Pancreas (tissue), 10 donors: ENCODE measurements at regions of chr5 and their contacts with region 1.

Region 1: GRCh38 chr5:65481635-65482295 is at the start of gene ADAMTS6:
- DNase-seq: peak; percentile 78 to 86 (median 80)
- ATAC-seq: peak; percentile 76 to 90 (median 89)
- H3K4me3 ChIP-seq: peak within 1 kb of the TSS; percentile 30 to 44 (median 36)
- H3K27ac ChIP-seq: peak within 1 kb of the TSS; percentile 14 to 87 (median 64)
- H3K4me1 ChIP-seq: peaks cover 4 to 14% (median 13%) of the 10 kb centered on the region in 3 donors
- H3K27me3 ChIP-seq: no peaks in the 10 kb centered on the region
- CTCF ChIP-seq: no peak
- total RNA-seq, gene ADAMTS6: 0.14 to 0.47 (median 0.30) TPM

Region 2: GRCh38 chr5:64576250-64576649 is 905.5 kb before region 1 on chr5:
- intact Hi-C with region 1: no loop called
- DNase-seq: no peak
- ATAC-seq: no peak
- H3K4me3 ChIP-seq: no peak overlapping the region
- H3K27ac ChIP-seq: no peak overlapping the region
- H3K4me1 ChIP-seq: no peaks in the 10 kb centered on the region
- H3K27me3 ChIP-seq: no peaks in the 10 kb centered on the region
- CTCF ChIP-seq: no peak

Region 3: GRCh38 chr5:64811050-64811640 is 670.6 kb before region 1 on chr5:
- intact Hi-C with region 1: loop called in 1 of 3 experiments (anchors 10 kb)
- DNase-seq: no peak
- ATAC-seq: peak in 2 of 4 donors; percentile 54 to 63
- H3K4me3 ChIP-seq: no peak overlapping the region
- H3K27ac ChIP-seq: no peak overlapping the region
- H3K4me1 ChIP-seq: no peaks in the 10 kb centered on the region
- H3K27me3 ChIP-seq: no peaks in the 10 kb centered on the region
- CTCF ChIP-seq: peak in 3 of 4 donors; percentile 30 to 44 (median 32)

Region 4: GRCh38 chr5:65102828-65103711 is 378.7 kb before region 1 on chr5:
- intact Hi-C with region 1: loop called in 1 of 3 experiments (anchors 5 kb)
- DNase-seq: peak; percentile 49 to 80 (median 65)
- ATAC-seq: peak; percentile 86 to 90 (median 88)
- H3K4me3 ChIP-seq: peak overlapping the region; percentile 37 to 65 (median 50)
- H3K27ac ChIP-seq: peak overlapping the region; percentile 55 to 81 (median 79)
- H3K4me1 ChIP-seq: peaks cover 0 to 3% (median 0%) of the 10 kb centered on the region in 3 donors
- H3K27me3 ChIP-seq: no peaks in the 10 kb centered on the region
- CTCF ChIP-seq: peak in 1 of 4 donors; percentile 10

Region 5: GRCh38 chr5:65577141-65577540 is 95.4 kb after region 1 on chr5:
- intact Hi-C with region 1: no loop called
- DNase-seq: no peak
- ATAC-seq: no peak
- H3K4me3 ChIP-seq: no peak overlapping the region
- H3K27ac ChIP-seq: no peak overlapping the region
- H3K4me1 ChIP-seq: no peaks in the 10 kb centered on the region
- H3K27me3 ChIP-seq: no peaks in the 10 kb centered on the region
- CTCF ChIP-seq: no peak

Region 6: GRCh38 chr5:65663804-65664521 is 182.2 kb after region 1 on chr5:
- intact Hi-C with region 1: no loop called
- DNase-seq: no peak
- ATAC-seq: no peak
- H3K4me3 ChIP-seq: no peak overlapping the region
- H3K27ac ChIP-seq: no peak overlapping the region
- H3K4me1 ChIP-seq: no peaks in the 10 kb centered on the region
- H3K27me3 ChIP-seq: no peaks in the 10 kb centered on the region
- CTCF ChIP-seq: peak in 2 of 4 donors; percentile 10 to 35